Left ventricle myocardium inferior (tissue), 1 donor: ENCODE measurements at regions of chr19 and their contacts with region 1.

Region 1: DNA sequence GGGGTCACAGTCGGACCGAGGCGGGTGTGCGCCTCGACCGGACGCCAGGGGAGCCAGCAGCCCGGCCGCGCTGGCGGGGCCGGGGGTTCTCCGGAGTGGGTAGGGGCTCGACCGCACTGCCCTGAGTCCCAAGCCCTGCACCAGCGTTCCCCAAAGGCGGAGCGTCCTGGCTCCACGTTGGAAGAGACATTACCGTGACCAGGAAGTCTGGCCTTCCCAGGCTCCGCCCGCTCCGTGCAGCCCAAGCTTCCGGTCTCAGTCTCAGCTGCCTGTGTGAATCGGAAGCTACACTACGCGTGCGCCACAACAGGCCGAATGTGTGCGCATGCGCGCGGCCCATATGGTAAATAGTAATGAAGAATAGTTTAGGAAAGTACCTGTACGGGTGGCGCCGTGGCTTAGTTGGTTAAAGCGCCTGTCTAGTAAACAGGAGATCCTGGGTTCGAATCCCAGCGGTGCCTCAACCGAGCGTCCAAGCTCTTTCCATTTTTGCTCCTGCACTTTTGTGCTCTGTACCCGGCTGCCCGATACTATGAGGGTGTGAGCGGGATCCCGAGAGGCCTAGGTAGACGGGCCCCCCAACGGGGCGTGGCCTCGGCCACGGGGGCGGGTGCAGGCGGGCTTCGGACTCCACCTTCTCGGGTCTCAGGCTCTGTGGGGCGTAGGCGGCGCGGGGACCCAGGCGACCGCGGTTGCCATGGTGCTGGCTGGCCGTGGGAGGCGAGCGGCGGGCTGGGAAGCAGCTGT is 17.3 kb upstream of the LRP3 start:
- DNase-seq: peak; percentile 95
- H3K4me3 ChIP-seq: peak overlapping the region; percentile 89
- H3K27ac ChIP-seq: peak overlapping the region; percentile 97
- H3K4me1 ChIP-seq: peaks cover 47% of the 10 kb centered on the region
- H3K27me3 ChIP-seq: no peaks in the 10 kb centered on the region
- CTCF ChIP-seq: peak; percentile 42

Region 2: GRCh38 chr19:32581704-32582179 is 595.1 kb before region 1 on chr19:
- intact Hi-C with region 1: no loop called
- DNase-seq: peak; percentile 27
- H3K4me3 ChIP-seq: peak overlapping the region; percentile 81
- H3K27ac ChIP-seq: peak overlapping the region; percentile 90
- H3K4me1 ChIP-seq: peaks cover 25% of the 10 kb centered on the region
- H3K27me3 ChIP-seq: no peaks in the 10 kb centered on the region
- CTCF ChIP-seq: no peak

Region 3: GRCh38 chr19:33143897-33144405 is 32.9 kb before region 1 on chr19:
- intact Hi-C with region 1: loop called (anchors 2 kb)
- DNase-seq: peak; percentile 49
- H3K4me3 ChIP-seq: no peak overlapping the region
- H3K27ac ChIP-seq: no peak overlapping the region
- H3K4me1 ChIP-seq: peaks cover 8% of the 10 kb centered on the region
- H3K27me3 ChIP-seq: peaks cover 13% of the 10 kb centered on the region
- CTCF ChIP-seq: peak; percentile 96

Region 4: DNA sequence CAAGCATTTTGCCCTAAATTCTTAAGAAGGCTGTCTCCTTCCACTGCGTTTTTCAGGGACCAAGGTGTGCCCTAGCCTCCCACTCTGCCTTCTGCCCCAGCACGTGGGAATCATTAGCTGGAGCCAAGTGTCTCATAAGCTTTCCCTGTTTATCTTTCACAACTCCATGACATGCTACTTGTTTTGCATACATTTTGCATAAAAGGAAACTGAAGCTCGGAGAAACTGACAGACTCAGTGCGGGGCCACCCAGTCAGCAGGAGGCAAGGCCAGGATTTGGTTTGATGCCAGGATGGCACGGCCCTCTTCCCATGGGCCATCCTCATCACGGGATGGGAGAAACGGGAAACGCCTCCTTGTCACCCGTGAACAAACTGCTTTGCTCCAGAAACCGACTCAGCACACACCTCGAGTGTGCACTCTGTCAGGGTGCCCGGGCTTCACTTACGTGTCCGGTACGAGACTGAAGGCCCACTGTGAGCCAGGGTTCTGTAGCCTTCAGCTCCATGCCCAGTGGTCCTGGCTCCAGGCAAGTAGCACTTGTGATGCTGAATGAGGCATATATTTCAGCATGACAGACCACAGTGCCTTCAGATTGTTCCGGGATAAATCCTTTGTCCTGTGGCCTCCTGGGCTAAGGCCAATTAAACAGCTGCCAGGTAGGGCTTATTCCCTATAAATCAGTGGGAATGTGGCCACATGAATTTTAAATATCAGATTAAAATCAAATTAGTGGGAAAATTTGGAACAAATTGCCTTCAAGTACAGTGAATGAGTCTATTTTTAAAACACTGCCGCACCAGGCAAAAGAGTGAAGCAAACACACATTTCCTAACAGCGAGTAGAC is 116.0 kb after region 1 on chr19:
- intact Hi-C with region 1: no loop called
- DNase-seq: no peak
- H3K4me3 ChIP-seq: no peak overlapping the region
- H3K27ac ChIP-seq: no peak overlapping the region
- H3K4me1 ChIP-seq: no peaks in the 10 kb centered on the region
- H3K27me3 ChIP-seq: peaks cover 81% of the 10 kb centered on the region
- CTCF ChIP-seq: no peak